ENCODE measurements at regions of chr13 and their contacts with region 1.

Region 1: GRCh38 chr13:59494560-59494970 is 669.2 kb downstream of the DIAPH3 start:
- DNase-seq: peak in 1 of 2 donors; percentile 69
- ATAC-seq: peak; percentile 26 to 91 (median 84)
- H3K4me3 ChIP-seq: no peak overlapping the region
- H3K27ac ChIP-seq: peak overlapping the region in 5 of 10 donors; percentile 24 to 67 (median 44)
- H3K4me1 ChIP-seq: peaks cover 0 to 49% (median 25%) of the 10 kb centered on the region in 9 donors
- H3K27me3 ChIP-seq: no peaks in the 10 kb centered on the region
- CTCF ChIP-seq: no peak

Region 2: DNA sequence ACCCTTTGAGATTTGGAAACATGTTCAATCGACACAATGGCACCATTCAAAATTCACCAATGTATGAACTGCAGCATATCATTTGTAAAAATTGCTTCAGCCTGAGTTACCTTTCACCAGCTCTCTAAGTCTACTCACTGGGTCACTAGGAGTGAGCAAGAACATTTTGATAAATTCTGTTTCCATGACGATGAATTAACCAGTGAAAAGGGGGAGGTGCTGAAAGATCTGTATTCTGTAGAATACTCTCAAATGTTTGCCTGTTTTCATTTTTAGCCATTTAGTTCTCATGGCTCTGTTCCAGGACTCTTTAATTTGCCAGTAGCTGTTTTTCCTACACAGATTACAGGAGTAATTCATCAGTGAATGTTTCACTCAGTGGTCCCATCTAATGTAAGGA is 214.3 kb before region 1 on chr13:
- intact Hi-C with region 1: no loop called
- DNase-seq: no peak
- ATAC-seq: no peak
- H3K4me3 ChIP-seq: no peak overlapping the region
- H3K27ac ChIP-seq: no peak overlapping the region
- H3K4me1 ChIP-seq: no peaks in the 10 kb centered on the region
- H3K27me3 ChIP-seq: no peaks in the 10 kb centered on the region
- CTCF ChIP-seq: no peak

Region 3: GRCh38 chr13:59447846-59448620 is 46.5 kb before region 1 on chr13:
- intact Hi-C with region 1: loop called in 1 of 10 experiments (anchors 10 kb)
- DNase-seq: no peak
- ATAC-seq: no peak
- H3K4me3 ChIP-seq: no peak overlapping the region
- H3K27ac ChIP-seq: no peak overlapping the region
- H3K4me1 ChIP-seq: peaks cover 0 to 16% (median 0%) of the 10 kb centered on the region in 9 donors
- H3K27me3 ChIP-seq: no peaks in the 10 kb centered on the region
- CTCF ChIP-seq: no peak

Region 4: DNA sequence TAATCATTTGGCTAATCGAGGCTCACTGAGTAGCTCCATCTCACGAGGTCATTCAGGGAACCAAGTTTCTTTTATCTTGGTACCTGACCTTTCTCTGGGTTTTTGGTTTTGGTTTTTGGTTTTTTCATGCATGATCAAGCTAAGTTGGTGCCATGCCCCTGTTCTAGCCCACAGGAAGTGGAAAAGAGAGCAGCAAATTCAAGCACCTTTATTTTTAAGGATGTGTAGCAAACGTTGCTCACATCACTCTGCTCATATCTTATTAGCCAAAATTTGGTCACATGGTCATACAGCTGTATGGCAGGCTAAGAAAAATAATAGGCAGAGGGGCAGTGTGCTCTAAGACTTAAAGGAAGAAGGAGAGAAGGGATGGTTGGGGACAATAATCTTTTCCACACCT is 75.6 kb after region 1 on chr13:
- intact Hi-C with region 1: no loop called
- DNase-seq: no peak
- ATAC-seq: no peak
- H3K4me3 ChIP-seq: no peak overlapping the region
- H3K27ac ChIP-seq: no peak overlapping the region
- H3K4me1 ChIP-seq: peaks cover 0 to 3% (median 0%) of the 10 kb centered on the region in 9 donors
- H3K27me3 ChIP-seq: no peaks in the 10 kb centered on the region
- CTCF ChIP-seq: no peak

Measured in heart right ventricle (tissue), 16 donors.